Mammary epithelial cell (primary cell): ENCODE measurements at regions of chr4 and their contacts with region 1.

Region 1: GRCh38 chr4:77203380-77204197 is 46.6 kb downstream of the CCNG2 start:
- DNase-seq: peak; percentile 75
- H3K4me3 ChIP-seq: no peak overlapping the region
- H3K27ac ChIP-seq: peak overlapping the region; percentile 90
- H3K4me1 ChIP-seq: peaks cover 44% of the 10 kb centered on the region
- H3K27me3 ChIP-seq: no peaks in the 10 kb centered on the region
- CTCF ChIP-seq: peak; percentile 80 to 87

Region 2: DNA sequence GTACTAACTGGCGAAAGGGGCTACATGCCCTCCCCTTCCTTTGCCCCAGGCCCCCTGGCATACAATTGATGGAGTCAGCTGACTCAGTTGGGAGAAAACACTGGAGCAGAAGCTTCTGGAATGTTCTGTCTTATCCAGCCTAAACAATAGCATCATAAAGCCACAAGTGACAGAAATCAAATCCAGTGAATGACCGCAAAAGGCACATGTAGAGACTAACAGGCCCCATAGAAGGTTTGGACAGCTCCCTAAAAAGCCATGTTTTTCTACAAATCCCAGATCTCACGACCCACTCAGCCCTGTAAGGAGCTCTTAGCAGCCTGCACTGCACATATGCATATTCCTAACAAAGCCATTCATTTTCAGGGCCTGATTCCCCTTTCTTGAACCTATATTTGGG is 1015.0 kb before region 1 on chr4:
- CTCF ChIA-PET with region 1: no interaction called
- dilution Hi-C with region 1: no loop called
- in situ Hi-C with region 1: no loop called
- intact Hi-C with region 1: no loop called
- DNase-seq: no peak
- H3K4me3 ChIP-seq: no peak overlapping the region
- H3K27ac ChIP-seq: no peak overlapping the region
- H3K4me1 ChIP-seq: peaks cover 4% of the 10 kb centered on the region
- H3K27me3 ChIP-seq: no peaks in the 10 kb centered on the region
- CTCF ChIP-seq: no peak

Region 3: GRCh38 chr4:76515975-76516843 is 687.4 kb before region 1 on chr4:
- CTCF ChIA-PET with region 1: no interaction called
- dilution Hi-C with region 1: no loop called
- in situ Hi-C with region 1: no loop called
- intact Hi-C with region 1: loop called (anchors 1 kb)
- DNase-seq: no peak
- H3K4me3 ChIP-seq: no peak overlapping the region
- H3K27ac ChIP-seq: no peak overlapping the region
- H3K4me1 ChIP-seq: no peaks in the 10 kb centered on the region
- H3K27me3 ChIP-seq: no peaks in the 10 kb centered on the region
- CTCF ChIP-seq: no peak

Region 4: DNA sequence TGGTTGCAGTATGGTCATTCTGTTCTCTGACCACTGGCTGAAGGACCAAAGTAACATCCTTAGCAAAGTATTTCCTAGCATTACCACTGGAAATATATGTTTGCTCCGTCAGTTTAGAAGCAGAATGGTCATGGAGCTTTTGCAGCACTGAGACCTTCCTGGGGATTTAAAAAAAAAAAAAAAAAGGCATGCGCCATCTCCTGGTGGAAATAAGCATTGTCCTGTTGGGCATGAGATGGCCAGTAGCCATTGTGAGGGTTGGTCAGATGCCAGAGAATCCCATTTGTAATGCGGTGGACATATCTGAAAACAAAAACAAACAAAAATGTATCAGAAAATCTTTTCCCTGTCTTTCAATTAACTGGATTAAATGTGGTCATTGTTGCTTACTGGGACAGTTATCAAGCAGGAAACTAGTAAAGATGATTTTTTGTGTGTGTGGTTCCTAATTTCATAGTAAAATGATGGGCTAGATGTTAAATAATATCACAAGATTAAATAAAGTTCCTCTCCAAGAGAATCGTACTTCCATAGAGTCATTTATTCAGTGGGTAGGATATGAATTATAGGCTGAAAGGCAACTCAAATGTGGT is 445.2 kb before region 1 on chr4:
- CTCF ChIA-PET with region 1: no interaction called
- dilution Hi-C with region 1: no loop called
- in situ Hi-C with region 1: loop called in 1 of 2 experiments (anchors 25 kb)
- intact Hi-C with region 1: loop called (anchors 5 kb)
- DNase-seq: peak; percentile 55
- H3K4me3 ChIP-seq: no peak overlapping the region
- H3K27ac ChIP-seq: no peak overlapping the region
- H3K4me1 ChIP-seq: peaks cover 16% of the 10 kb centered on the region
- H3K27me3 ChIP-seq: no peaks in the 10 kb centered on the region
- CTCF ChIP-seq: peak; percentile 73 to 91

Region 5: DNA sequence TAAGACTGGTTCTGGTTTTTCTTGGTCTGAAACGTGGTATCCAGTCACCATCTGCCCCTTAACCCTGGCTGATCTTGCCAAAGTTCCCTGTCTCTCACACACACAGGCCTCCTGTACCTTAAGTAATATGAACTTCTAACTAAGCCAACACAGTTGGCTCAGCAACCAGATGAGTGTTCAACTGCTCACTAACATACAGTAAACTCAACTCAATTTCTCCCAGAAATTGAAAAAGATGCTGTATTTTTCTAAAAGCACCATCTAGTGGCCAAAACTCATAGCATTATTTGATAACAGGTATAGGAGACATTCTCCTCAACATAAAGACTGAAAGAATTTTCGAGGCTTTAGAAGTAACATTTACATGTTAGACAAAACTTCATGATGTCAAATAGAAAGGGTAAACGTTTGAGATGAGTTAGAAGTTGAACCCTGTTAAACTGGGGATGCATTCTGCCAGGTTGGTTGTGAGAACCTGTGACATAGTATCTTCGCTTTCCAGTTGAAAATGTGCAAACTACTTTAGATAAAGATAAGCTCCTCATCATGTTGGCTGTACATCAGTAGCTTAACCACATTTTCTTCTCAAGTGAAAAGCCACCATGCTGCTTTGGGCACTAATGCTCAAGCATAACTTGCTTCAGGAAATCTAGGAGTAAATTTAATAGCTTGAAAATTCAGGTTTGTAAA is 159.0 kb before region 1 on chr4:
- CTCF ChIA-PET with region 1: interaction called, 6 read pairs
- dilution Hi-C with region 1: no loop called
- in situ Hi-C with region 1: loop called in 1 of 2 experiments (anchors 10 kb)
- intact Hi-C with region 1: loop called (anchors 1 kb)
- DNase-seq: peak; percentile 39
- H3K4me3 ChIP-seq: no peak overlapping the region
- H3K27ac ChIP-seq: no peak overlapping the region
- H3K4me1 ChIP-seq: peaks cover 10% of the 10 kb centered on the region
- H3K27me3 ChIP-seq: no peaks in the 10 kb centered on the region
- CTCF ChIP-seq: peak; percentile 63 to 64

Region 6: DNA sequence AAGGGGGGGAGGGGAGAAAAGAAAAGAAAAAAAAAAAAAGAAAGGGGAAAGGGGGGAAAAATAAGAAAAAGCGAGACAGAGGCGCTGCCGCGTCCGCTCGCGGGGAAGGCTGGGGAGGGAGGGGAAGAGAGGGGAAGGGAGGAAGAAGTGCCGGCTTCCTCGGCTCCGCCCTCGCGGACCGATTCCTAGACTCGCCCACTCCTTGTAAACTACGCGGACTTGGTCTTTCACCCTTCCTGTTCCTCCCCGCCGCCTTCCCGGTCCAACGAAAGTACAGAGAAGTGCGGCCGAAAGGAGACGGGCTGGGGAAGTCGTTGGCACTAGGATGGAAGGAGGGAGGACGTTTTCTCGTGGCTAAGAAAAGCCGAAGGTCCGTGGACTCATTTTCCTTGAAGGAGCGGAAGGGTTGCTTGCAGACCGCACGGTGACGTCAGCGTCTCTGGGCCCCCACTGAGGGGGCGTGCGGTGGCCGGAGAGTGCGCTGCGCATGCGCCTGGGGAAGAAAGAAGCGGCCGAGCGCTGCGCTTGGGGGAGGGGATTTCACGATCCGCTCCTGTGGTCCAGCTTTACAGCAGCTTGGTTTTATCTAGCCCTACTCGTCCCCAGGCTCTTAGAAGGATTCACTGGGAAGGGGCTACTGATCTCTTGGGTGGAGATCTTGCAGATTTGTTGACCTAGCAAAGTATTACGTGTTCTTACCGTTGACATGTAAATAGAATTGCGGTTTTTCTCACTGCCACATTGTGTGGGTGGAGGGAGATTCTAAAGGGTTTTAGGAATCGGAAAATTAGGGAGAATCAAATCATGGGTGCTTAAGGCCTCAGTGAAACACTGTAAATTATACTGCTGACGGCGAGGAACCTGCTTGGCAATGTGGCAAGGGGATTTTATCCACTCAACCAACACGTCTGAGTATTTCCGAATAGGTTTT is 127.5 kb before region 1 on chr4 and contains the start of gene CCNI:
- CTCF ChIA-PET with region 1: interaction called, 4 read pairs
- dilution Hi-C with region 1: no loop called
- in situ Hi-C with region 1: no loop called
- intact Hi-C with region 1: loop called (anchors 1 kb)
- DNase-seq: peak; percentile 96
- H3K4me3 ChIP-seq: peak within 1 kb of the TSS; percentile 73 to 92 (median 83)
- H3K27ac ChIP-seq: peak within 1 kb of the TSS; percentile 96
- H3K4me1 ChIP-seq: peaks cover 14% of the 10 kb centered on the region
- H3K27me3 ChIP-seq: no peaks in the 10 kb centered on the region
- CTCF ChIP-seq: no peak
- total RNA-seq, gene CCNI: 177 to 250 TPM

Region 7: DNA sequence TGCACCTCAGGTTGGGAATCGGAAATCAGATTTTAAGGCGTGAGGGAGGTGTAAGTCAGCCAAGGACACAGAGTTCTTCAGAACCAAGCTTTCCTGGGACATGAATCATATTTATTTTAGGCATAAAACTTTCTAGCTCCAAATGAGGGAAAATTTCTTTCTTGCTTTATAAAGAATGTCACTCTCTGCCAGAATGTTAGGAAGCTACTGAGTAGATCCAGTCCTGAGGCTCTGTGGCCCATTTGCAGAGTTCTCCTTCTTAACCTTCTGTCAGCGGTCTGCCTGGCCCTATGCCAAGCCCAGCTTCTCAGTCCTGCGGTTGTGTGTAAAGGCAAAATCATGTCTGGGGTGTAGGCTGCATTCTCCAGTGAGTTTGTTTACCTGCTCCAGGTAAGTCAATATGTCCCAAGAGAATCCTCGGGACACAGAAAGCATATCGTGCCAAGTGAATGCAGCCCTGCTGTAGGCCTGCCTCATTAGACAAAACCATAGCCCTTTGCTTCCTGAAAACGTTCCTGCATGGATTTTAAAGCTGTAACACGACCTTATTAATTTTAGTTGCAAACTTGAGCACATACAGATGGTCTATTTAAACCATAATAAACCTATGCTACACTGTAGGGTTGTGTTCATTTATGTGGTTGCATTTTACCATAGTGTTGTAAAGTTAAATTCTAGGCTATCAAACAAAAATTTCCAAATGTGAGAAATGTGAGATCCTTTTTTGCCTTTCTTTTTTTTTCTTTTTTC is 98.6 kb before region 1 on chr4:
- CTCF ChIA-PET with region 1: interaction called, 3 read pairs
- dilution Hi-C with region 1: loop called (anchors 5 kb)
- in situ Hi-C with region 1: no loop called
- intact Hi-C with region 1: no loop called
- DNase-seq: peak; percentile 73
- H3K4me3 ChIP-seq: no peak overlapping the region
- H3K27ac ChIP-seq: no peak overlapping the region
- H3K4me1 ChIP-seq: peaks cover 13% of the 10 kb centered on the region
- H3K27me3 ChIP-seq: no peaks in the 10 kb centered on the region
- CTCF ChIP-seq: no peak

Region 8: DNA sequence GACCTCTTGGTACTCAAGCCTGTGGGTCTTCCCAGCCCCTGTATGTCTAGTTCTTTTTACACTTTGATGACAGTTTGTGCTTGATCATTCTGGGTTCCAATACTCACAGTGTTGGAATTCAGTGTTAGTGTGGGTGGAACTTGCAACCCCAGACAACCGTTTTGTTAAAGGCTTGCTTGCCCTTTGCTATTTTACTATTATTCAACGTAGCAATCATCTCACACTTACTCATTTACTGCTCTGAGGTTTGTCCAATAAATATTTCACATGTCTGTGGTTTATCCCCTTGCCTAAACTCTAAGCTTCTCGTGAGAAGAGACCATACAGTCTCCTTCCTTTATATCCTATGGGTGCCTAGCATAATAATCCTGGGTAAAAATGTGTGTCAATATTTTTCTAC is 31.3 kb before region 1 on chr4:
- CTCF ChIA-PET with region 1: interaction called, 5 read pairs
- dilution Hi-C with region 1: no loop called
- in situ Hi-C with region 1: no loop called
- intact Hi-C with region 1: loop called (anchors 1 kb)
- DNase-seq: peak; percentile 91
- H3K4me3 ChIP-seq: no peak overlapping the region
- H3K27ac ChIP-seq: peak overlapping the region; percentile 91
- H3K4me1 ChIP-seq: peaks cover 58% of the 10 kb centered on the region
- H3K27me3 ChIP-seq: no peaks in the 10 kb centered on the region
- CTCF ChIP-seq: no peak

Region 9: GRCh38 chr4:77385124-77385969 is 181.8 kb after region 1 on chr4:
- CTCF ChIA-PET with region 1: no interaction called
- dilution Hi-C with region 1: no loop called
- in situ Hi-C with region 1: no loop called
- intact Hi-C with region 1: no loop called
- DNase-seq: peak; percentile 53
- H3K4me3 ChIP-seq: no peak overlapping the region
- H3K27ac ChIP-seq: no peak overlapping the region
- H3K4me1 ChIP-seq: no peaks in the 10 kb centered on the region
- H3K27me3 ChIP-seq: peaks cover 10% of the 10 kb centered on the region
- CTCF ChIP-seq: peak; percentile 86 to 87